ENCODE measurements at regions of chr11 and their contacts with region 1.

Region 1: GRCh38 chr11:117979481-117980211 is 6.5 kb upstream of the IL10RA start:
- DNase-seq: no peak
- H3K4me3 Mint-ChIP-seq: no peak overlapping the region
- H3K27ac Mint-ChIP-seq: peak overlapping the region; percentile 32
- H3K4me1 Mint-ChIP-seq: peaks cover 68% of the 10 kb centered on the region
- H3K27me3 Mint-ChIP-seq: no peaks in the 10 kb centered on the region

Region 2: DNA sequence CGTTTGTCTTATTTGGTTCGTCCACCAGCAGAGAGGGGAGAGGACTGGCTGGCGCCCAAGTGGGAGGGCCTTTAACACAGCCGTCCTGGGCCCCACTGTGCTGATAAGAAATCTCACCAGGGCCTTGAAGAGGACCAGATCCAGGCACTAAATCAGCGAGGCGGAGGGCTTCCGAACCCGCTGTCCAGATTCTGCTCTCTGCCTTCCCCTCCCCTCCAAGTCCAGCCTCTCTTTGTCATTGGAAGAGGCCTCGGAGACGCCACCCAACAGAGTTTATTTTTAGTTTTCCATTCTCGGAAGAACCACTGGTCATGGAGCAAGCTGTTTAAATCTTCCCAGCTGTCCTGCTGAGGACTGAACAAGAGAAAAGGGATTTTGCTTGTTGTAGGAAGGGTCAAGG is 93.9 kb before region 1 on chr11:
- CTCF ChIA-PET with region 1: no interaction called
- POLR2A ChIA-PET with region 1: no interaction called
- DNase-seq: no peak
- H3K4me3 Mint-ChIP-seq: no peak overlapping the region
- H3K27ac Mint-ChIP-seq: no peak overlapping the region
- H3K4me1 Mint-ChIP-seq: no peaks in the 10 kb centered on the region
- H3K27me3 Mint-ChIP-seq: peaks cover 24% of the 10 kb centered on the region

Region 3: GRCh38 chr11:117959438-117960149 is 20.1 kb before region 1 on chr11:
- CTCF ChIA-PET with region 1: interaction called, 11 read pairs
- POLR2A ChIA-PET with region 1: no interaction called
- DNase-seq: no peak
- H3K4me3 Mint-ChIP-seq: no peak overlapping the region
- H3K27ac Mint-ChIP-seq: peak overlapping the region; percentile 80
- H3K4me1 Mint-ChIP-seq: peaks cover 43% of the 10 kb centered on the region
- H3K27me3 Mint-ChIP-seq: no peaks in the 10 kb centered on the region

Region 4: GRCh38 chr11:118084247-118084646 is 104.6 kb after region 1 on chr11:
- CTCF ChIA-PET with region 1: no interaction called
- POLR2A ChIA-PET with region 1: no interaction called
- DNase-seq: no peak
- H3K4me3 Mint-ChIP-seq: no peak overlapping the region
- H3K27ac Mint-ChIP-seq: no peak overlapping the region
- H3K4me1 Mint-ChIP-seq: no peaks in the 10 kb centered on the region
- H3K27me3 Mint-ChIP-seq: peaks cover 4% of the 10 kb centered on the region